Activated CD4-positive, alpha-beta memory T cell treated with anti-CD3 and anti-CD28 coated beads for 36 hours (primary cell): ENCODE measurements at regions of chr3 and their contacts with region 1.

Region 1: DNA sequence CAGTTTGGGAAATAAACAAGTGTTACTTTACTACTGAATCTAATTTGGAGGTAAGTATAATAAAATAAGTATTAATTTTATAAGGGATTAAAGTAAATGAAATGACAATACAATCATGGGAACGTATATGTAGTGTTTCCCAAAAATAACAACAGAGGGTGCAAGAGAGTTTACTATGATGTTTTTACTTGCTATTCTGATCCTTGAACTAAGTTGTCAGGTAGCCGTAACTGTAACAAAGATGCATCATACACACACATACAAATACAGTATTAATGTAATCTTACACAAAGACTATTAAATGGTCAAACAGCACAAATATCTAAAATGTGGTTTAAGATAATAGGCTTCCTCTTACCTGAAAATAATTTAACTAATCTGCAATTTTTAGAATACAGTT is 311.4 kb downstream of the TBC1D5 start:
- DNase-seq: no peak
- H3K4me3 Mint-ChIP-seq: no peak overlapping the region
- H3K27ac Mint-ChIP-seq: no peak overlapping the region
- H3K4me1 Mint-ChIP-seq: no peaks in the 10 kb centered on the region
- H3K27me3 Mint-ChIP-seq: no peaks in the 10 kb centered on the region

Region 2: GRCh38 chr3:16456784-16457415 is 974.1 kb before region 1 on chr3:
- CTCF ChIA-PET with region 1: no interaction called
- POLR2A ChIA-PET with region 1: no interaction called
- intact Hi-C with region 1: no loop called
- DNase-seq: no peak
- H3K4me3 Mint-ChIP-seq: no peak overlapping the region
- H3K27ac Mint-ChIP-seq: no peak overlapping the region
- H3K4me1 Mint-ChIP-seq: peaks cover 17% of the 10 kb centered on the region
- H3K27me3 Mint-ChIP-seq: no peaks in the 10 kb centered on the region

Region 3: GRCh38 chr3:17686613-17687012 is 255.6 kb after region 1 on chr3:
- CTCF ChIA-PET with region 1: no interaction called
- POLR2A ChIA-PET with region 1: no interaction called
- intact Hi-C with region 1: loop called (anchors 5 kb)
- DNase-seq: no peak
- H3K4me3 Mint-ChIP-seq: no peak overlapping the region
- H3K27ac Mint-ChIP-seq: no peak overlapping the region
- H3K4me1 Mint-ChIP-seq: no peaks in the 10 kb centered on the region
- H3K27me3 Mint-ChIP-seq: no peaks in the 10 kb centered on the region